PC-9 (cell line): ENCODE measurements at regions of chr15 and their contacts with region 1.

Region 1: DNA sequence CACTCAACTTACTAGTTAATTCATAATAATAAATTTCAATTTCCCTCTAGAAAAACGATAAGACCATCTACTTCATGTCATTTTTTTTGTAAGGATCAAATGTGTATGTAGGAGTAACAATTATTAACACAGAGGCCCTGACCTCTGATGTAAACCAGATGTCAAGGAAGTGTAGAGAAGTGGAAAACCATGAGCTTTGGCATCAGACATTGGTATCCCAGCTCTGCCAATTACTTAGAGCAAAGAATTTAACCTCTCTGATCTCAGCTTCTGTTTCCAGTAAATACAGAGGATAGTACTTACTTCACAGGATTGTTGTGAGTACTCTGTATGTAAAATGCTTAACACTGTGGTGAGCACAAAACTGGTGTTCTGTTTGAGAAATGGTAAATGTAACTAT is 17.5 kb downstream of the AQR start:
- DNase-seq: no peak
- H3K4me3 ChIP-seq: no peak overlapping the region
- H3K27ac ChIP-seq: no peak overlapping the region
- H3K4me1 ChIP-seq: no peaks in the 10 kb centered on the region
- H3K27me3 ChIP-seq: no peaks in the 10 kb centered on the region
- CTCF ChIP-seq: no peak

Region 2: GRCh38 chr15:35028235-35028984 is 76.4 kb after region 1 on chr15:
- CTCF ChIA-PET with region 1: interaction called, 12 read pairs
- POLR2A ChIA-PET with region 1: no interaction called
- intact Hi-C with region 1: no loop called
- DNase-seq: no peak
- H3K4me3 ChIP-seq: no peak overlapping the region
- H3K27ac ChIP-seq: no peak overlapping the region
- H3K4me1 ChIP-seq: peaks cover 8% of the 10 kb centered on the region
- H3K27me3 ChIP-seq: no peaks in the 10 kb centered on the region
- CTCF ChIP-seq: no peak